Gastrocnemius medialis (tissue), 4 donors: ENCODE measurements at regions of chr10 and their contacts with region 1.

Region 1: DNA sequence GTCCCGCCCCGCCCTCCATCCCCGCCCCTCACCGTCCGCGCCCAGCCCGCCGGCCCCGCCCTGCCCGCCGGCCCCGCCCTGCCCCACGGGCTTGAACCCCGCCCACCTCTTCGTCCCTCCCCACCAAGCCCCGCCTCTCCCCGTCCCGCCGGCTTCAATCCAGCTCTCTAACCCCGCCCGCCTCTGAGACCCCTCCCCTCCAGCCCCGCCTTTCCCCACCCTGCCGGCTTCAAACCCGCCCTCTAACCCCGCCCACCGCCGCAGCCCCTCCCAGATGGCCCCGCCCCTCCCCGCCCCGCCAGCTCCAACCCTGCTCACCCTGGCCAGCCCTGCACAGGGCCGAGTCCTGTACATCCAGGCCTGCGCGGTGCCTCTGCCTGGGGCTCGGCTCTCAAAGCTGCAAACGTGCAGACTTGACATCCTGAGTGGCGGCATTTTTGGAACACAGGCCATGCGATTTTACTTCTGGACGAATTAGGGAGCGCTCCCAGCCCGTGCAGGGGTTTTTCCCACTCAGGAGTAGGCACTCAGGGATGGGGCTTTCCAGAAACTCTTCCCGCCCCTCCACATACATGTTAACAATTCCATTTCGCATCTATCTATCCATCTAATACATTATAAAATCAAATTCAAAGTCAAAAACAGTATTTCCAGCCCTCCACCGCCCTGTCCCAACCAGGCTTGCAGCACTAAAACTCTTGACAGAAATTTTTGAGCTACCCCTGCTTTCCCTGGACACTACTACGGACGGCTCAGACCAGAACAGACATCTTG is 475 bp upstream of the NMT2 start:
- DNase-seq: peak; percentile 94 to 97
- ATAC-seq: peak; percentile 83 to 85
- H3K4me3 ChIP-seq: peak overlapping the region; percentile 18 to 48 (median 38)
- H3K27ac ChIP-seq: peak overlapping the region; percentile 32 to 64 (median 52)
- H3K4me1 ChIP-seq: peaks cover 34 to 37% of the 10 kb centered on the region in 2 donors
- H3K27me3 ChIP-seq: no peaks in the 10 kb centered on the region
- CTCF ChIP-seq: no peak
- POLR2A ChIP-seq: no peak

Region 2: DNA sequence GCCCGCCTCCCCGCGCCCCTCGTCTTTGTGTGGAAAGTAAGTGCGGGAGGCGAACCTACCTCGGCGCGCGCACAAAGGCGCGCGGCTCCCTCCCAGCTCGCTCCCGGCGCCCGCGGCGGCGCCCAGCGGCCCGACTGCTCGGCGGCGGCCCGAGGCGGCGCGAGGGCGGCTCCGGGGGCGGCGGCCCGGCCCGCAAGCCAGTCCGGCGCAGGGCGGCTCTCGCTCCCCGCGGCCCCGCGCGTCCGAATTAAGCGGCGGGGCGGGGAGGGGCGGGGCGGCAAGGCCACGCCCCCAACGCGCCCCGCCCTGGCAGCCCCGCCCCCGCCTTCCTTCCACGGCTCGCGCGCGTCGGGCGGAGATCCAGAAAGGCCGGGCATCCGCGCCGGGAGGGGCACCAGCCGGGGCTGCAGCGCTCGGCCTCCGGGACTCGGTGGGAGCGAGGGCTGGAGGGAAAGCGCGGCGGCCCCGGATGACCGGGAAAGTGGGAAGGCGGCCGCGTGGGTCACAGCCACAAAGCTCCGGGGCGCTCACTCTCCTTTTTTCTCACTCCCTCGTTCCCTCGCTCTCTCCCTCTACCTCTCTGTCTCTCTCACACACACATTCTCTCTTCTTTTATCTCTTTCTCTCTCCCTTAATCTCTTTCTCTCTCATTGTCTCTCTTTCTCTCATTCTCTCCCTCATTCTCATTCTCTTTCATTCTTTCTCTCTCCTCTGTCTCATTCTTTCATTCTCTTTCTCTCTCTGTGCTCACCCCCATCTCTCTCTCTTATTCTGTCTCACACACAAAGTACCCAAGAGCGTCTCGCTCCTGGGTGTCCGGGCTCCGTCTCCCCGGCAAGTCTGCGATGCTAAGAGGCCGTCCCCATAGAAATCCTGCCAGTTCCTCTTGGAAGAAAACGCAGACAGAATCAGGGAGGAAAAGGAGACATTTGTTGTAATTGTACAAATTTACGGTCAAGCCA is 564.5 kb before region 1 on chr10:
- in situ Hi-C with region 1: no loop called
- intact Hi-C with region 1: loop called (anchors 5 kb)
- DNase-seq: peak; percentile 52 to 53
- ATAC-seq: peak; percentile 89 to 90
- H3K4me3 ChIP-seq: peak overlapping the region; percentile 56 to 79 (median 66)
- H3K27ac ChIP-seq: peak overlapping the region; percentile 30 to 58 (median 44)
- H3K4me1 ChIP-seq: peaks cover 7 to 12% of the 10 kb centered on the region in 2 donors
- H3K27me3 ChIP-seq: no peaks in the 10 kb centered on the region
- CTCF ChIP-seq: no peak
- POLR2A ChIP-seq: peak in 1 of 2 donors; percentile 66

Region 3: DNA sequence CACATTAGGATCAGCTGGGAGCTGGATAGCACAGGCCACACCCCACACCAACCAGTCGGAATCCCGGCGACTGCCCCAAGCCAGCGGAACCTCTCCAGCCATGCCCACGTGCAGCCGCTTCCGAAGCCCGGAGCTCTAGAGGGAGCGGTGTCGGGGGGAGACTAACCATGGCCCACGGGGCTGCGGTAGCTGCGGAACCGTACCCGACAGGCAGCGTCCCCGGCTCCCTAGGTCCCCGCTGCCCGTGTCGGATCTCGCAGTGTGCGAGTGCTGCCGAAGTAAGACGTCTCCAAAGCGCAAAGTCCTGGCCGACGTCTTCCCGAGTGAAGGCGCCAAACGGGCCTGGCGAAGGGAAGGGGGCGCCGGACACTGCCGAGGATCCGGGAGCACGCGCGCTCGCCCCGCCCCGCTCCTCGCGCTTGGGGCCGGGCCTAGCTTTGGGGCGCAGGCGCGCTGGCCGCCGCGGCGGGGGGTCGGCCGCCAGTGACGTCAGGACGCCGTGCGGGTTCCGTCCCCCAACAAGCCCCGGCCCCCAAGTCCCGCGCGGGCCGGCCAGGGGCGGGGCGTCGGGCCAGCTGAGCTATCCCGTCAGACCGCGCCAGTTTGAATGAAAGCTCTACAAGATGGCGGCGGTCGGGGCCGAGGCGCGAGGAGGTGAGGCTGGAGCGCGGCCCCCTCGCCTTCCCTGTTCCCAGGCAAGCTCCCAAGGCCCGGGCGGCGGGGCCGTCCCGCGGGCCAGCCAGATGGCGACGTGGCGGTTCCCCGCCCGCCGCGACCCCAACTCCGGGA is 290.5 kb before region 1 on chr10 and contains the start of gene SUV39H2:
- in situ Hi-C with region 1: no loop called
- intact Hi-C with region 1: loop called (anchors 2 kb)
- DNase-seq: peak; percentile 89 to 93
- ATAC-seq: peak; percentile 85 to 88
- H3K4me3 ChIP-seq: peak within 1 kb of the TSS; percentile 89 to 95 (median 94)
- H3K27ac ChIP-seq: peak within 1 kb of the TSS; percentile 97 to 99 (median 99)
- H3K4me1 ChIP-seq: peaks cover 30 to 34% of the 10 kb centered on the region in 2 donors
- H3K27me3 ChIP-seq: no peaks in the 10 kb centered on the region
- CTCF ChIP-seq: peak in 2 of 5 experiments; percentile 5 to 8
- POLR2A ChIP-seq: peak; percentile 87 to 88
- total RNA-seq, gene SUV39H2: 0.71 to 7.4 (median 5.0) TPM

Region 4: DNA sequence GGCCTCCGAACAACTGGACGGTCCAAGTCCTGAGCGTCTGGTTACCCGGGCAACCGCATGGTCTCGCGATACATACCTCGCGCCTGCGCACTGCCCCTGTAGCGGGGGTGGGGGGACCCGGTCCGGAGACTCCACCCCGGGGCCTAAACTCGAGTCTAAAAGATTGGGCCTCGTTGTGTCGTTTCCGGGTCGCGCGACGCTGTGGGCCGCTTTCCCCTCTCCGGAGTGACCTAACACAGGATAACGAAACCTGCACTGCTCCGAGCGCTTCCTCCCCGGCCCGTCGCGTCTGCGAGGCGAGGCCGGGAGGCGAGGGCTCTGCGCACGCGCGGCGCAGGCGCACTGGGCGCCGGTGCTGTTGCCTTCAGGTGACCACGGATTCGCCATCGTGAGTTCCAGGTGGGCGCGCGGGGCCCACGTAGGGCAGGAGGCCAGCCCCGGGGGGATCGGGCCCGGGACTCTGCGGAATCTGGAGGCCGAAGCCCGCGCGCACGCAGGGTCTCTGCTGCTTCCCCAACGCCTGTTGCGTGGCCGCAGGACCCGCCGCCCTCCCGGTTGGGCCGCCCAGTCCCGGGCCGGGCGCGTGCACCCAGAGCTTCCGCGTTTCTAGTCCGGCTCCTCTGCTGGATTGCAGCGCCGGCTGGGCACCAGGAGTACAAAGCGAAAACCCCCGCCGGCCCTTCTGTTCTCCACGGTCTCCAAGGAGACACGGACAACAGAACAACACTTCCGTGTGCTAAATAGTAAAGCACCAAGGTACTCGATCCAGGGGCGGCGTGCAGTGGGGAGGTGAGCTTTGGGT is 71.8 kb before region 1 on chr10 and contains the start of gene RPP38:
- in situ Hi-C with region 1: no loop called
- intact Hi-C with region 1: loop called (anchors 1 kb)
- DNase-seq: peak; percentile 91 to 95
- ATAC-seq: peak; percentile 98
- H3K4me3 ChIP-seq: peak within 1 kb of the TSS; percentile 74 to 92 (median 84)
- H3K27ac ChIP-seq: peak within 1 kb of the TSS; percentile 88 to 98 (median 93)
- H3K4me1 ChIP-seq: peaks cover 18 to 20% of the 10 kb centered on the region in 2 donors
- H3K27me3 ChIP-seq: no peaks in the 10 kb centered on the region
- CTCF ChIP-seq: no peak
- POLR2A ChIP-seq: peak; percentile 70
- total RNA-seq, gene RPP38: 8.9 to 17.2 (median 12.8) TPM

Region 5: GRCh38 chr10:16817125-16818019 is 1648.4 kb after region 1 on chr10 and contains the start of gene RSU1:
- in situ Hi-C with region 1: loop called in 1 of 4 experiments (anchors 25 kb)
- intact Hi-C with region 1: no loop called
- DNase-seq: peak; percentile 100
- ATAC-seq: peak; percentile 98 to 99
- H3K4me3 ChIP-seq: peak within 1 kb of the TSS; percentile 70 to 91 (median 77)
- H3K27ac ChIP-seq: peak within 1 kb of the TSS; percentile 85 to 94 (median 90)
- H3K4me1 ChIP-seq: peaks cover 18 to 20% of the 10 kb centered on the region in 2 donors
- H3K27me3 ChIP-seq: no peaks in the 10 kb centered on the region
- CTCF ChIP-seq: no peak
- POLR2A ChIP-seq: peak; percentile 59 to 69
- total RNA-seq, gene RSU1: 24.2 to 32.8 (median 26.1) TPM